Activated naive CD4-positive, alpha-beta T cell treated with anti-CD3 and anti-CD28 coated beads, Interleukin-2, amount 10 ng/mL, durations not matched to agents 7 days and 5 days (primary cell): ENCODE measurements at regions of chrX and their contacts with region 1.

Region 1: GRCh38 chrX:25020905-25021449 is 5.2 kb upstream of the ARX start:
- DNase-seq: peak; percentile 37
- H3K4me3 Mint-ChIP-seq: peak overlapping the region; percentile 21
- H3K27ac Mint-ChIP-seq: peak overlapping the region; percentile 49
- H3K4me1 Mint-ChIP-seq: peaks cover 19% of the 10 kb centered on the region
- H3K27me3 Mint-ChIP-seq: peaks cover 89% of the 10 kb centered on the region

Region 2: DNA sequence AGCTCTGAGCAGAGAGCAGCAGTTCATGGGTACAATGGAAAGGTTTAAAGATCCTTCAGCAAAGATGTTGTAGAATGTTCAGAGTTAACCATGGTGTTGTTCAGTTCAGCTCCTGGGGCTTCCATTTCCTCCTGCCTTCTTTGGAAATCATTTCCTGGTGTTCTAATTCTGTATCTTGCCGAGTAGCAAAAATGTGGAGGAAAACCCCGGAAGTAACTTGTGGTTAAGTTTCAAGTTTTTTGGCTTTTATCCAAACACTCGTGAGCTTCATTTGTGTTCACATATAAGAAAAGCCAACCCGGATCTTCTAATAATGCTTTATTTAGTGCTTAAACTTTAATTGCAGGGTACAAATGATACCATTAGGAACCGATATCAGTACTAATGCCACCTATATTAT is 28.4 kb after region 1 on chrX:
- CTCF ChIA-PET with region 1: no interaction called
- DNase-seq: no peak
- H3K4me3 Mint-ChIP-seq: no peak overlapping the region
- H3K27ac Mint-ChIP-seq: no peak overlapping the region
- H3K4me1 Mint-ChIP-seq: peaks cover 13% of the 10 kb centered on the region
- H3K27me3 Mint-ChIP-seq: peaks cover 9% of the 10 kb centered on the region

Region 3: DNA sequence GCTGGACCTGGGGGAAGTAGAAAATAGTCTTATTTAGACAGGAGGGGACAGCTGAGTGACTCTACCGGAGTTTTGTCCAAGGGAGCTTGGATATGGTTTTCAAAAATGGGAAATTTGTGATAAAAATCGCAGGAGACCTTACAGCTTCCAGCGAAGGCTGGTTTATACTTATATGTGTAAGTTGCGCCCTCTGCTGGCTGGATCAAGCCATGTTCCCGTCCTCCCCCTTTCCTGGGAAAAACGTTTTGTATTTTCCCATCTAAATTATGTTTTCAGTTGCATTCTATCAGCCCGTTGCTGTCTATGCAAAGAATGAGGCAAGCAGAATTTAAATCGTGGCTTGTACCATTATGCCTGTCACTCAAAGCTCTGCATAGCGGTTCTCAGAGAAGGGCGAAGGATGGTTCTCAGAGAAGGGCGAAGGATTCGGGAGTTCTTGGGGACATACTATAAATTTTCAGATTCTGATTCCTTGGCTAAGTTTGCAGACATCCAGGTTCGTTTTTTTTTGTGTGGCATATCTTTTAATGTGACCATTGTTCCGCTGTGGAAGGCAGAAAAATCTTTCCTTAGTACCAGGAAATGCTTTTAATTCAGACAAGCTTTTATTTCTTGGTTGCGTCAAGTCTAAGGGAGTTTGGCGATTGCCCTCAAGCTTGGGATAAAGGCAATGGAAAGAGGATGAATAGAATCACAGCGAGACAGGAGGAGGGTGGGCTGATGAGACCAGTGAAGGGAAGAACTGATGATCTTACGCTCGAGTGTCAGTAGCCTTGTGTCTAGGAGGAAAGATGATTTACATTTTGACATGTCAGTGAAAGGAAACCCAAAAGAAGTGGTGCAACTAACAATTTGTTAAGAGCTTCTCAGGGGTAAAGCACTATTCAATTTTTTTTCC is 123.3 kb after region 1 on chrX:
- CTCF ChIA-PET with region 1: interaction called, 17 read pairs
- DNase-seq: peak; percentile 47
- H3K4me3 Mint-ChIP-seq: no peak overlapping the region
- H3K27ac Mint-ChIP-seq: no peak overlapping the region
- H3K4me1 Mint-ChIP-seq: no peaks in the 10 kb centered on the region
- H3K27me3 Mint-ChIP-seq: peaks cover 3% of the 10 kb centered on the region